Posterior cingulate gyrus (tissue), 11 donors: ENCODE measurements at regions of chr1 and their contacts with region 1.

Region 1: DNA sequence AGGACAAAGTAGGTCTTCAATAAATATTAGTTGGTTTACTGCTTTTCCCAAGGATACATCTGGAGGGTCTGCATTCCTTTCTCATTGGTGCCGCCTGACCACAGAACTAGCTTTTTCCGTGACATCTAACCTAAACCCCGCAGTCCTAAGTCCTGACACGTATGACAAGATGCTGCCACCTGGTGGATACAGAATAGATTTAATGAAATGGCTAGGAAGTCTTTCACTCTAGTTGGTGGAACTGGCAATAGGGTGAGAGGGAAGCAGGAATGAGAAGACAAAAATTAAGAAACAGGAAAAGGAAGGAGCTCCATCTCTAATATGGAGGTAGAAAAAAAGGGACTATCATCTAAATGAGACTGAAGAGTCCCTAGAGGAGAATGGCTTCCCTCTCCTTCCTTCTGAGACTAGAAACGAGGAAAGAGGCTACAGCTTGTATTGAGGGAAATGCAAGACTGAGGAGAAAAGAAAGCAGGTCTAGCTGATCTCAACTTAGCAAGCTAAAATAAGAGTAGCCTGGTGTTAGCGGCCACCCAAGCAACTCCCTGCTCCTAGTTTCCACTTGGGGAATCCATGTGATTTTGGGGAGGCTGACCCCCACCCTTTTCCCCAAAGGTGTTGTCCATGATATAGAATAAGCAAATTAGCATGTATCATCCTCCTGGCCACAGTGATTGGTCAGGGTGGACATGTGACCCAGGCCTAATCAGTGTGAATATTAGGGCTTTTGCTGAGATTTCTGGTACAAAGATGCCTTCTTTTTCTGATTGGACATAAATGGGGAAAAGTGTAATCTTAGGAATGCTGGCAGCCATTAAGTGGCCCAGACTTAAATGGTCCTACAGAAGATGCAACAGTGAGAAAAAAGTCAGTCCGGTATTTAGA is 5.9 kb downstream of the RFX5 start:
- DNase-seq: peak in 5 of 10 donors; percentile 24 to 80 (median 48)

Region 2: DNA sequence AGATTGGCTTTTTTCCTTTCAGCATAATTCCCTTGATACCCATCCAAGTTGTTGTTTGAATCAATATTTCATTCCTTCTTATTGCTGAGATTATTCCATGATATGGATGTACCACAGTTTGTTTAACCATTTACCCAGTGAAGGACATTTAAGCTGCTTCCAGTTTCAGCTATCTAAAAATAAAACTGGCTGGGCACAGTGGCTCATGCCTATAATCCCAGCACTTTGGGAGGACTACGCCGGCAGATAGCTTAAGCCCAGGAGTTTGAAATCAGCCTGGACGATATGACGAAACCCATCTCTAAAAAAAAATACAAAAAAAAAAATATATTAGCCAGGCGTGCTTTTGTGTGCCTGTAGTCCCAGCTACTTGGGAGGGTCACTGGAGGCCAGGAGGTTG is 227.2 kb before region 1 on chr1:
- intact Hi-C with region 1: no loop called
- DNase-seq: no peak

Region 3: DNA sequence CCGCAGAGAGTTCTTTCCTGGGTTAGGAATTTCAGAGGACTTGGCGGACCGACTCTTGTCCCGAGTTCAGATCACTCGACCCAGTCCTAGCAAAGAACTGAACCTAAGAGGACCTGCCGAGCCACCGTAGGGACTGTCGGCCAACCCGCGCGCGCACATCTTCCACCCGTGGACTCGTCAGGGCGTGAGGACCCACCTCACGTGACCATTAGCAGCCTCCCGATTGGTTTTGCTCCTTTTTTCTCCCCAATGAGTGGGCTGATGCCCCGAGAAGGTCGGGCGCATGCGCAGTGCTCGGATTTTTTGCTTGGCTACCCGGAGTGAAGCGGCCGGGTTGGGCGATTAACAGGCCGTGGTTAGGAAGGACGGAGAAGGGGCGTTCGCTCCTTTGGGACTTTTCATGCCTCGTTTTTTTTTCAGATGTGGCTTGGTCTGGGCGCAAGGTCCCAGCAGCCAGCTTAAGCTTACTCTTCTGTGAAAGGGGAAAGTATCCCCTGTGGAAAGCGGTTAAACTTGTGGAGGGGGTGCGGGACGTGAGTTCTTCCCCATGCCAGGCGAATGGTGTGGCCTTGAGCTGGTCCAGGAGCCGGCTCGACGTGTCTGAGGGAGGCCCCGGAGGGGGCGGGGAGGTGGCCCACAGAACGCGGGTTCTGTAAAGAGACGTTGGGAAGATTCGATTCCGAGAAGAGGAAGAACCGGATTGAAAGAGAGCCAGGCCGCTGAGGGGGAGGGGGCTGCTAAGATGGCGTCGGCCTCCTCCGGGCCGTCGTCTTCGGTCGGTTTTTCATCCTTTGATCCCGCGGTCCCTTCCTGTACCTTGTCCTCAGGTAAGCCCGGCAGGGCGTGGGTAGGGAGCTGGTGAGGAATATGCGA is 142.6 kb before region 1 on chr1 and contains the start of gene PIP5K1A:
- intact Hi-C with region 1: loop called (anchors 5 kb)
- DNase-seq: peak; percentile 96 to 100 (median 99)

Region 4: GRCh38 chr1:151281969-151282882 is 58.9 kb before region 1 on chr1 and contains the start of gene ZNF687:
- intact Hi-C with region 1: loop called (anchors 5 kb)
- DNase-seq: peak; percentile 100

Region 5: GRCh38 chr1:151594143-151594625 is 253.1 kb after region 1 on chr1:
- intact Hi-C with region 1: no loop called
- DNase-seq: peak; percentile 60 to 97 (median 78)